H1 (cell line): ENCODE measurements at regions of chr11 and their contacts with region 1.

Region 1: DNA sequence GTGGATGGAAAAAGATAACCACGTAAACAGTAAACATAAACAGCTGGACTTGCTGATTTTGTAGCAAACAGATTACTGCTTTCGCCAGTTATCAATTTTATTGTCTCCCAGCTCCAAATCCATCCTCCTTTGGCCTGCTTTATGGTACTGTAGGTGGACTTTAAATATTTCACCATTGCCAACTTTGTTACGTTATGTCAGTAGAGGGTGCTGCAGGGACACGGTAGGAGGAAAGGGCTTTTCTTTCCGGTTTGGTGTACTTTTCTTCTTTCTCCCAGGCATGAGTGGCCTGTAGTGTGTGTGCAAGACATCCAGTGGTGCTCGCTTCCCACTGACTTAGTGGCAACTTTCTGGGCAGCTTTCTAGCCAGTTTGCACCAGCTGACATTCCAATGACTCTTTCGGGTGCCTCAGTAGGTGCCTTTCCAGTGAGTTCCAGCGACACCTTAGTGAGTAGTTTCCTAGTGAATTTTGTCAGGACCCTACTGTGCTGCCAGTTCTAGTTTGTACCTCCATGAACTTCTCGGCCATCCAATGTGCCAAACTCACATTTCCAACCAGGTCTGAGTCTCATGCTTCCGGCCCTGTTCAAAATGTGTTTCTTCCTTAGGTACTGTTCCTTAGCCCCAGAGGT is 267.6 kb upstream of the TENM4 start:
- DNase-seq: peak in 1 of 2 experiments; percentile 51
- H3K4me3 ChIP-seq: no peak overlapping the region
- H3K27ac ChIP-seq: no peak overlapping the region
- H3K4me1 ChIP-seq: no peaks in the 10 kb centered on the region
- H3K27me3 ChIP-seq: no peaks in the 10 kb centered on the region
- CTCF ChIP-seq: peak in 2 of 3 experiments; percentile 66 to 71; a peak in 3 of 4 replicates
- EP300 ChIP-seq: no peak
- POLR2A ChIP-seq: no peak
- RAD21 ChIP-seq: peak; percentile 93 to 95

Region 2: GRCh38 chr11:79697905-79698304 is 10.5 kb before region 1 on chr11:
- CTCF ChIA-PET with region 1: interaction called, 11 read pairs
- POLR2A ChIA-PET with region 1: no interaction called
- DNase-seq: no peak
- H3K4me3 ChIP-seq: no peak overlapping the region
- H3K27ac ChIP-seq: no peak overlapping the region
- H3K4me1 ChIP-seq: no peaks in the 10 kb centered on the region
- H3K27me3 ChIP-seq: no peaks in the 10 kb centered on the region
- CTCF ChIP-seq: no peak
- EP300 ChIP-seq: no peak
- POLR2A ChIP-seq: no peak
- RAD21 ChIP-seq: no peak

Region 3: GRCh38 chr11:80155412-80156017 is 447.1 kb after region 1 on chr11:
- CTCF ChIA-PET with region 1: interaction called, 14 read pairs
- POLR2A ChIA-PET with region 1: no interaction called
- DNase-seq: no peak
- H3K4me3 ChIP-seq: no peak overlapping the region
- H3K27ac ChIP-seq: no peak overlapping the region
- H3K4me1 ChIP-seq: peaks cover 0 to 16% (median 5%) of the 10 kb centered on the region in 4 experiments; a peak in 5 of 7 replicates
- H3K27me3 ChIP-seq: no peaks in the 10 kb centered on the region
- CTCF ChIP-seq: peak in 2 of 3 experiments; percentile 47 to 52; a peak in 3 of 4 replicates
- EP300 ChIP-seq: no peak
- POLR2A ChIP-seq: no peak
- RAD21 ChIP-seq: peak; percentile 71 to 72